CD4-positive, alpha-beta memory T cell (primary cell): ENCODE measurements at regions of chr15 and their contacts with region 1.

Region 1: DNA sequence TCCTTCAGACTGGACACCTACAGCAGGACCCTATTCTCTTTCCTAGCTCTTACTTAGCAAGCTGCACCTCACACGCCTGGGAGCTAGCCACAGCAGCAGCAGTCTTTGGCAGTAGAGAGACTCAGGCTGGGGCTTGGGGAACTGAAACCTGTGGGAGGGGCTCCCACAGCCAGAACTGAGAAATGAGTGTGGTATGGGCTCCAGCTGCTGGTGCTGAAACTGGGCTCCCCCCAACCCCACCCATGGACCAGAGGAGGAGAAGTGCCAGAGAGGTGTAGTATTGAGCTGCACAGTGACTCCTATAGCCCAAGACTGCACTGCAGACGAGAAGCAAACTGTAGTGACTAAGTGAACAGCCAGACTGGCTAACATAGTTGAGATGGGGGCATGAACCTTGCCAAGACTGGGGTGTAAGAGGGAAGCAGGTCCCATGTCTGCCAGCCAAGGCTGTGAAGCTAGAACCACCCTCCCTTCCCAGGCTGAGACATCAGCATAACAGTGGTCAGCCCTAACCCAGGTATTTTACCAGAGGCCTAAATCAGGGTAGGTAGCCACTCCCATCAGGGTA is 62.5 kb downstream of the MYO5A start:
- DNase-seq: peak in 3 of 5 donors; percentile 8 to 49 (median 17)
- H3K4me3 ChIP-seq: no peak overlapping the region
- H3K4me3 Mint-ChIP-seq: peak overlapping the region in 4 of 8 donors; percentile 9 to 39 (median 28)
- H3K27ac ChIP-seq: peak overlapping the region; percentile 35
- H3K27ac Mint-ChIP-seq: peak overlapping the region; percentile 26 to 95 (median 87)
- H3K4me1 ChIP-seq: peaks cover 47% of the 10 kb centered on the region
- H3K4me1 Mint-ChIP-seq: peaks cover 43 to 65% (median 53%) of the 10 kb centered on the region in 4 donors
- H3K27me3 ChIP-seq: no peaks in the 10 kb centered on the region
- H3K27me3 Mint-ChIP-seq: no peaks in the 10 kb centered on the region

Region 2: GRCh38 chr15:52227456-52227855 is 238.8 kb before region 1 on chr15:
- CTCF ChIA-PET with region 1: no interaction called
- POLR2A ChIA-PET with region 1: no interaction called
- intact Hi-C with region 1: no loop called
- DNase-seq: peak; percentile 68 to 78 (median 69)
- H3K4me3 ChIP-seq: no peak overlapping the region
- H3K4me3 Mint-ChIP-seq: no peak overlapping the region
- H3K27ac ChIP-seq: no peak overlapping the region
- H3K27ac Mint-ChIP-seq: peak overlapping the region in 1 of 7 donors; percentile 60
- H3K4me1 ChIP-seq: peaks cover 8% of the 10 kb centered on the region
- H3K4me1 Mint-ChIP-seq: peaks cover 10 to 21% (median 14%) of the 10 kb centered on the region in 4 donors
- H3K27me3 ChIP-seq: no peaks in the 10 kb centered on the region
- H3K27me3 Mint-ChIP-seq: no peaks in the 10 kb centered on the region

Region 3: GRCh38 chr15:52256366-52256765 is 209.9 kb before region 1 on chr15:
- CTCF ChIA-PET with region 1: interaction called, 5 read pairs
- POLR2A ChIA-PET with region 1: no interaction called
- intact Hi-C with region 1: loop called (anchors 5 kb)
- DNase-seq: peak; percentile 75 to 77 (median 76)
- H3K4me3 ChIP-seq: no peak overlapping the region
- H3K4me3 Mint-ChIP-seq: peak overlapping the region; percentile 63 to 90 (median 82)
- H3K27ac ChIP-seq: no peak overlapping the region
- H3K27ac Mint-ChIP-seq: peak overlapping the region; percentile 20 to 86 (median 72)
- H3K4me1 ChIP-seq: peaks cover 15% of the 10 kb centered on the region
- H3K4me1 Mint-ChIP-seq: peaks cover 10 to 26% (median 19%) of the 10 kb centered on the region in 4 donors
- H3K27me3 ChIP-seq: no peaks in the 10 kb centered on the region
- H3K27me3 Mint-ChIP-seq: no peaks in the 10 kb centered on the region

Region 4: GRCh38 chr15:52417521-52417920 is 48.7 kb before region 1 on chr15:
- CTCF ChIA-PET with region 1: interaction called, 5 read pairs
- POLR2A ChIA-PET with region 1: no interaction called
- intact Hi-C with region 1: loop called (anchors 5 kb)
- DNase-seq: no peak
- H3K4me3 ChIP-seq: no peak overlapping the region
- H3K4me3 Mint-ChIP-seq: no peak overlapping the region
- H3K27ac ChIP-seq: no peak overlapping the region
- H3K27ac Mint-ChIP-seq: no peak overlapping the region
- H3K4me1 ChIP-seq: no peaks in the 10 kb centered on the region
- H3K4me1 Mint-ChIP-seq: peaks cover 0 to 2% (median 0%) of the 10 kb centered on the region in 4 donors
- H3K27me3 ChIP-seq: no peaks in the 10 kb centered on the region
- H3K27me3 Mint-ChIP-seq: no peaks in the 10 kb centered on the region

Region 5: DNA sequence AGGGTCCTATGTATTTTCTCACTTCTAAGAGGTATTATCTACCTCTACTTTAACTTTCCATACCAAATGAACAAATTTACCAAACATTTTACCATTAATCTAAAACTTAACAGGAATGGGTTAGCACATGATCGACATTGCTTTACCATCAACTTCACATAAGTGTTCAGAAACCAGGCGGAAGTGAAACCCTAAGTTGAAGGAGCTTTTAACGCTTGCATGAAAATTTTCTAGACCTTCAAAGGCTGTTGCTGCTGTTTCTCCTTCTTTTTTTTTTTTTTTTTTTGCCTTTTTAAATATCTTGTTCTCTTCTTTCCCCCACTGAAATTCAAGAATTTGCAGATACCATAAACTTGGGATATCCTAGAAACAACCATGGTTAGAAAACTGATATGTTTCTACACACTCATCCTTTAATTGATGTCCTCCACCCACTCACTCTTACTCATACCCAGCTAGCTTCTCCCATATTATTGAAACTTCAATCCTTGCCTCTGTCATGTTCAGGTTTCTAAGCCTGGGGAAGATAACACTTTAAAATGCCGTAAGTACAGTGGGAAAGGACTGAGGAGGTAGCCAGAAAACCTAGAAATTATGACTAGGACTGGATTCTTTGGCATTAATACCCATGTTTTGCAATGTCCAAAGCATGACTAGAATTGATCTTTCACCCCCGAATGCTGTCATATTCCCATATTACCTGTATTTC is 37.7 kb after region 1 on chr15:
- CTCF ChIA-PET with region 1: no interaction called
- POLR2A ChIA-PET with region 1: no interaction called
- intact Hi-C with region 1: loop called (anchors 5 kb)
- DNase-seq: no peak
- H3K4me3 ChIP-seq: no peak overlapping the region
- H3K4me3 Mint-ChIP-seq: peak overlapping the region; percentile 27 to 86 (median 64)
- H3K27ac ChIP-seq: no peak overlapping the region
- H3K27ac Mint-ChIP-seq: peak overlapping the region in 6 of 7 donors; percentile 22 to 79 (median 53)
- H3K4me1 ChIP-seq: peaks cover 30% of the 10 kb centered on the region
- H3K4me1 Mint-ChIP-seq: peaks cover 37 to 54% (median 45%) of the 10 kb centered on the region in 4 donors
- H3K27me3 ChIP-seq: no peaks in the 10 kb centered on the region
- H3K27me3 Mint-ChIP-seq: no peaks in the 10 kb centered on the region

Region 6: DNA sequence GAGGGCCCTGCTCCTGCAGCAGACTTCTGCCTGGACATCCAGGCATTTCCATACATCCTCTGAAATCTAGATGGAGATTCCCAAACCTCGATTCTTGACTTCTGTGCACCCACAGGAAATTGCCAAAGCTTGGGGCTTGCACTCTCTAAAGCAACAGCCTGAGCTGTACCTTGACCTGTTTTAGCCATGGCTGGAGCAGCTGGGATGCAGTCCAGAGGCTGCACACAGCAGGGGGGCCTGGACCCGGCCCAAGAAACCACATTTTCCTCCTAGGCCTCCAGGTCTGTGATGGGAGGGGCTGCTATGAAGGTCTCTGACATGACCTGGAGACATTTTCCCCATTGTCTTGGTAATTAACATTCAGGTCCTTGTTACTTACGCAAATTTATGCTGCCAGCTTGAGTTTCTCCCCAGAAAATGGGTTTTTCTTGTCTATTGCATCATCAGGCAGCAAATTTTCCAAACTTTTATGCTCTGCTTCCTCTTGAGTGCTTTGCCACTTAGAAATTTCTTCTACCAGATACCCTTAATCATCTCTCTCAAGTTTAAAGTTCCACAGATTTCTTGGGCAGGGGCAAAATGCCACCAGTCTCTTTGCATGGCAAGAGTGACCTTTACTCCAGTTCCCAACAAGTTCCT is 74.3 kb after region 1 on chr15:
- CTCF ChIA-PET with region 1: no interaction called
- POLR2A ChIA-PET with region 1: no interaction called
- intact Hi-C with region 1: no loop called
- DNase-seq: no peak
- H3K4me3 ChIP-seq: no peak overlapping the region
- H3K4me3 Mint-ChIP-seq: no peak overlapping the region
- H3K27ac ChIP-seq: no peak overlapping the region
- H3K27ac Mint-ChIP-seq: no peak overlapping the region
- H3K4me1 ChIP-seq: no peaks in the 10 kb centered on the region
- H3K4me1 Mint-ChIP-seq: peaks cover 0 to 1% (median 0%) of the 10 kb centered on the region in 4 donors
- H3K27me3 ChIP-seq: no peaks in the 10 kb centered on the region
- H3K27me3 Mint-ChIP-seq: peaks cover 0 to 3% of the 10 kb centered on the region in 2 donors

Region 7: GRCh38 chr15:52924630-52925029 is 458.4 kb after region 1 on chr15:
- CTCF ChIA-PET with region 1: no interaction called
- POLR2A ChIA-PET with region 1: no interaction called
- intact Hi-C with region 1: no loop called
- DNase-seq: no peak
- H3K4me3 ChIP-seq: no peak overlapping the region
- H3K4me3 Mint-ChIP-seq: no peak overlapping the region
- H3K27ac ChIP-seq: no peak overlapping the region
- H3K27ac Mint-ChIP-seq: no peak overlapping the region
- H3K4me1 ChIP-seq: no peaks in the 10 kb centered on the region
- H3K4me1 Mint-ChIP-seq: no peaks in the 10 kb centered on the region
- H3K27me3 ChIP-seq: no peaks in the 10 kb centered on the region
- H3K27me3 Mint-ChIP-seq: peaks cover 5 to 15% of the 10 kb centered on the region in 2 donors

Region 8: DNA sequence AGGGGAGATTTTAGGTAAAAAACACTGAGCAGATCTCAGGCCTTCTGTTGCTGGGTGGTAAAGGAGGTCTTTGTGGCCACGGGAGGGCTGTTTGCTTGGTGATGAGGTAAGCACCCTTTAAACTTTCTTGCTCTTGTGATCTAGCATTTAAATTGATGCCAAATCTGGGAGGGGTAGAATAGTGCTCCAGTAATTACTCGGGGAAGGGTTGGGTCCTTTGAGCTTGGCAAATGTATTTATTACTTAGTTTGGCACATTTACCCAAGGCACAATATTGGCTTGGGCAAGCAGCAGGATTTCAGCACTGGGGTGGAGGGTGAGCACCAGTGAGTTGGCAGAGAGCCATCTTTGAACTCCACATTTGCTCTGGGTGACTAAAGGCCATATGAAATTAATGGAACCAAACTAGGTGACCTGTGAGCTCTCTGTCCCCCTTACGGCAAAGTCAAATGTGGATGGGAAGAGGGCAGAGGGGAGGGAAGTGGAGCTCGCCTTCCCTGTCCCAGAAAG is 509.8 kb after region 1 on chr15:
- CTCF ChIA-PET with region 1: no interaction called
- POLR2A ChIA-PET with region 1: no interaction called
- intact Hi-C with region 1: no loop called
- DNase-seq: no peak
- H3K4me3 ChIP-seq: no peak overlapping the region
- H3K4me3 Mint-ChIP-seq: no peak overlapping the region
- H3K27ac ChIP-seq: no peak overlapping the region
- H3K27ac Mint-ChIP-seq: no peak overlapping the region
- H3K4me1 ChIP-seq: no peaks in the 10 kb centered on the region
- H3K4me1 Mint-ChIP-seq: peaks cover 0 to 1% (median under 1%) of the 10 kb centered on the region in 4 donors
- H3K27me3 ChIP-seq: no peaks in the 10 kb centered on the region
- H3K27me3 Mint-ChIP-seq: peaks cover 0 to 3% of the 10 kb centered on the region in 2 donors